AG04450 (cell line): ENCODE measurements at regions of chr1 and their contacts with region 1.

Region 1: GRCh38 chr1:204207136-204207616 is 6.6 kb downstream of the GOLT1A start:
- DNase-seq: no peak
- H3K4me3 ChIP-seq: no peak overlapping the region
- H3K27ac ChIP-seq: no peak overlapping the region
- H3K27me3 ChIP-seq: no peaks in the 10 kb centered on the region
- CTCF ChIP-seq: peak; percentile 92

Region 2: GRCh38 chr1:203871107-203871875 is 335.9 kb before region 1 on chr1:
- CTCF ChIA-PET with region 1: interaction called, 15 read pairs
- POLR2A ChIA-PET with region 1: no interaction called
- DNase-seq: peak; percentile 62
- H3K4me3 ChIP-seq: no peak overlapping the region
- H3K27ac ChIP-seq: no peak overlapping the region
- H3K27me3 ChIP-seq: no peaks in the 10 kb centered on the region
- CTCF ChIP-seq: peak; percentile 99

Region 3: GRCh38 chr1:204051258-204051657 is 155.9 kb before region 1 on chr1:
- CTCF ChIA-PET with region 1: no interaction called
- POLR2A ChIA-PET with region 1: no interaction called
- DNase-seq: no peak
- H3K4me3 ChIP-seq: no peak overlapping the region
- H3K27ac ChIP-seq: no peak overlapping the region
- H3K27me3 ChIP-seq: peaks cover 2% of the 10 kb centered on the region
- CTCF ChIP-seq: no peak

Region 4: GRCh38 chr1:204162231-204163074 is 44.7 kb before region 1 on chr1:
- CTCF ChIA-PET with region 1: interaction called, 190 read pairs
- POLR2A ChIA-PET with region 1: no interaction called
- DNase-seq: no peak
- H3K4me3 ChIP-seq: no peak overlapping the region
- H3K27ac ChIP-seq: no peak overlapping the region
- H3K27me3 ChIP-seq: peaks cover 6% of the 10 kb centered on the region
- CTCF ChIP-seq: peak; percentile 100

Region 5: DNA sequence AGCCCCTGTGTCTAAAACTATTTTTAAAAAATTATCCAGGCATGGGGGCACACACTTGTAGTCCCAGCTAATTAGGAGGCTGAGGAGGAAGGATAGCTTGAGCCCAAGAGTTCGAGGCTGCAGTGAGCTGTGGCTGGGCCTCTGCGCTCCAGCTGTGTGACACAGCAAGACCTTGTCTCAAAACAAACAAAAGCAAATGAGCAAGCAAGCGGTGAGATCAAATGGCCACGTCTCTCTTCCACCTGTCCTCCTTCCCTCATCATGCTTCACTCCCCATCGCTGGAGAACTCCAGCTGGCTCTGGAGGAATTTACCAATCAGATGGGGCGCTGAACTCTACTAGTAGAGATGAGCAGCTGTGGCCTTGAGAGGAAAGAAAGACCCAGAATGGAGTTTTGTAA is 27.0 kb before region 1 on chr1:
- CTCF ChIA-PET with region 1: interaction called, 33 read pairs
- POLR2A ChIA-PET with region 1: no interaction called
- DNase-seq: no peak
- H3K4me3 ChIP-seq: no peak overlapping the region
- H3K27ac ChIP-seq: no peak overlapping the region
- H3K27me3 ChIP-seq: no peaks in the 10 kb centered on the region
- CTCF ChIP-seq: no peak

Region 6: DNA sequence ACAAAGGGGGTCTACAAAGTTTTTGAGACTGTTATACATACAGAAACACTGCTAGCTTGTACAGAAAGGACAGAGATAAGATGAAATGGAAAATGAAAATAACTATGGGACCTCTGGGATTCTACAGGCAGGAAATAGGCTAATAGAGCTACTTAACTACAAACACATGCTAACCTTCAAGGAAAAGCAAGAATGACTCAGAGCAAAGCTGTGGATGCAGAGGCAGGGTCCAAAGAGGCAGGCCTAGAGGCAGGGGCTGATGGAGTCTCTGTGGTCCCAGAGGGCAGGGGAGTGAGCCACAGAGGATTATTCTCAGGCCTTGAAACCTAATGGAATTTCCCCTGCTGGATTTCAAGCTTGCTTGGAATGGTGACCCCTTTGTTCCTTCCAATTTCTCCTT is 25.4 kb after region 1 on chr1:
- CTCF ChIA-PET with region 1: interaction called, 11 read pairs
- POLR2A ChIA-PET with region 1: no interaction called
- DNase-seq: no peak
- H3K4me3 ChIP-seq: no peak overlapping the region
- H3K27ac ChIP-seq: no peak overlapping the region
- H3K27me3 ChIP-seq: no peaks in the 10 kb centered on the region
- CTCF ChIP-seq: no peak

Region 7: GRCh38 chr1:204377795-204378608 is 170.8 kb after region 1 on chr1:
- CTCF ChIA-PET with region 1: interaction called, 15 read pairs
- POLR2A ChIA-PET with region 1: no interaction called
- DNase-seq: no peak
- H3K4me3 ChIP-seq: peak overlapping the region; percentile 58
- H3K27ac ChIP-seq: no peak overlapping the region
- H3K27me3 ChIP-seq: peaks cover 71% of the 10 kb centered on the region
- CTCF ChIP-seq: no peak

Region 8: GRCh38 chr1:204461331-204462228 is 254.4 kb after region 1 on chr1:
- CTCF ChIA-PET with region 1: no interaction called
- POLR2A ChIA-PET with region 1: no interaction called
- DNase-seq: no peak
- H3K4me3 ChIP-seq: no peak overlapping the region
- H3K27ac ChIP-seq: no peak overlapping the region
- H3K27me3 ChIP-seq: no peaks in the 10 kb centered on the region
- CTCF ChIP-seq: no peak